Left lung (tissue), 14 donors: ENCODE measurements at regions of chr6 and their contacts with region 1.

Region 1: DNA sequence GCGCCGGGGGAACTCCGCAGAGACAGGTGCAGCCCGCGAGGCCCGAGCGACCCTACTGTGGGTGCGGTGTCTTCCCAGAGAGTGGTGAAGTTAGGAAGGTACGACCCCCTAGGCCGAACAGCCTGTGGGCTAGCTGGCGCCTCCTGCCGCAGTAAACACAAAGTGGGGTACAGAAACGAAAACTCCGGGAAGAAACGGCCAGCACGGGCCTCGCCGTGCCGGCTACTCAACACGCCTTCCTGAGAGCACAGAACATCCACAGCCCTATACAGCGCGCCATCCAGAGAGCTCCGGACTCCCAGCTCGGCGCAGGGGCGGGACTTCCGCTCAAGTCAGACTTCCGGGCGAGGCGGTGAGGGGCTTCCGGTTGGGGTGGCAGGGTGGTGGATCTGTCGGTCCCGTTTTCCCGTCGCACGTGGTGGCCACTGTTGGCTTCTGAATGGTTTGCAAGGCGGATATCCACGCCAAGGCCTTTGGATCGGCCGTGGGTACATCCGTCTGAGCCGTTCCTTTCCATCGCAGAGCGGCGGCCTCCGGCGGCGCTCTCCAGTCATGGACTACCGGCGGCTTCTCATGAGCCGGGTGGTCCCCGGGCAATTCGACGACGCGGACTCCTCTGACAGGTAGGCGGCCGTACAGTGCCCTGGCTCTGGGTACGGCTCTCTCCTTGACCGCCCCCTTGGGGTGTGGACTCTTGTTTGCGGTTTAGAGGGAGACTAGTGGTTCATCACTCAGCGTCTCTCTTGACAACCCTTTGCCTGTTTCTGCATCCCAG is at the starts of genes CAGE1 and RIOK1:
- DNase-seq: peak; percentile 93 to 98 (median 96)
- ATAC-seq: peak; percentile 99
- H3K4me3 ChIP-seq: peak within 1 kb of the TSS; percentile 83 to 94
- H3K27ac ChIP-seq: peak within 1 kb of the TSS; percentile 92 to 95
- H3K4me1 ChIP-seq: peaks cover 7 to 28% of the 10 kb centered on the region in 2 donors
- H3K27me3 ChIP-seq: no peaks in the 10 kb centered on the region
- CTCF ChIP-seq: peak in 1 of 2 donors; percentile 12
- polyA plus RNA-seq, gene CAGE1: 0.08 to 0.16 (median 0.10) TPM in 4 of 6 donors, not detected in the others
- polyA plus RNA-seq, gene RIOK1: 30.5 to 38.3 (median 31.9) TPM

Region 2: GRCh38 chr6:7300926-7301325 is 88.7 kb before region 1 on chr6:
- intact Hi-C with region 1: loop called in 1 of 2 experiments (anchors 10 kb)
- DNase-seq: no peak
- ATAC-seq: no peak
- H3K4me3 ChIP-seq: no peak overlapping the region
- H3K27ac ChIP-seq: no peak overlapping the region
- H3K4me1 ChIP-seq: peaks cover 4 to 8% of the 10 kb centered on the region in 2 donors
- H3K27me3 ChIP-seq: no peaks in the 10 kb centered on the region
- CTCF ChIP-seq: no peak